ENCODE measurements at regions of chr3 and their contacts with region 1.

Region 1: DNA sequence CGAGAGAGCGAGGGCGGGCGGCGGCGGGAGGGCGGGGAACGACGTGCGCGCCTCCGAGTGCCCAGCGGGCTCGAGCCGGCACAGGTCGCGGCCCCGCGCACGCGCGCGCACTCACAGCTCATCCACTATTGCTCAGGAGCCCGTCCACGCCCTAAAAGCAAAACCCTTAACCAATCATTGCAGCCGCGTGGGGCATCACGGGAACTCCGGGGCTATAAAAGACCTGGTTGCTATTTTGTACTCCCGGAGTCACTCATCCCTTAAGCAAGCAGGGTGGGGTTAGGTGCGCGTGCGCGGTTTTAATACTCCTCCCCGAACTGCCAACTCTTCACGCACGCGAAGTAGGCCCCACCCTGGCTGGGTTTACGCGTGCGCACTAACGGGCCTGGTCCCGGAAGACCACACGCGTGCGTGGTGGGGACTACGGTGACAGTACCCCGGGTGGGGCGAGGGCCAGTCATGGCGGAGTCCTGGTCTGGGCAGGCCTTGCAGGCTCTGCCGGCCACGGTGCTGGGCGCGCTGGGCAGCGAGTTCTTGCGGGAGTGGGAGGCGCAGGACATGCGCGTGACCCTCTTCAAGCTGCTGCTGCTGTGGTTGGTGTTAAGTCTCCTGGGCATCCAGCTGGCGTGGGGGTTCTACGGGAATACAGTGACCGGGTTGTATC is at the starts of genes RHOA and TCTA:
- DNase-seq: peak; percentile 97 to 100 (median 99)
- ATAC-seq: peak; percentile 84
- H3K4me3 ChIP-seq: peak within 1 kb of the TSS; percentile 75
- H3K4me3 Mint-ChIP-seq: peak within 1 kb of the TSS; percentile 96
- H3K27ac ChIP-seq: peak within 1 kb of the TSS; percentile 94 to 95
- H3K27ac Mint-ChIP-seq: peak within 1 kb of the TSS; percentile 97
- H3K4me1 ChIP-seq: peaks cover 75% of the 10 kb centered on the region
- H3K4me1 Mint-ChIP-seq: peaks cover 70% of the 10 kb centered on the region
- H3K27me3 ChIP-seq: no peaks in the 10 kb centered on the region
- H3K27me3 Mint-ChIP-seq: no peaks in the 10 kb centered on the region
- CTCF ChIP-seq: no peak
- total RNA-seq, gene RHOA: 256 to 271 TPM
- total RNA-seq, gene TCTA: 21.4 to 22.0 TPM

Region 2: DNA sequence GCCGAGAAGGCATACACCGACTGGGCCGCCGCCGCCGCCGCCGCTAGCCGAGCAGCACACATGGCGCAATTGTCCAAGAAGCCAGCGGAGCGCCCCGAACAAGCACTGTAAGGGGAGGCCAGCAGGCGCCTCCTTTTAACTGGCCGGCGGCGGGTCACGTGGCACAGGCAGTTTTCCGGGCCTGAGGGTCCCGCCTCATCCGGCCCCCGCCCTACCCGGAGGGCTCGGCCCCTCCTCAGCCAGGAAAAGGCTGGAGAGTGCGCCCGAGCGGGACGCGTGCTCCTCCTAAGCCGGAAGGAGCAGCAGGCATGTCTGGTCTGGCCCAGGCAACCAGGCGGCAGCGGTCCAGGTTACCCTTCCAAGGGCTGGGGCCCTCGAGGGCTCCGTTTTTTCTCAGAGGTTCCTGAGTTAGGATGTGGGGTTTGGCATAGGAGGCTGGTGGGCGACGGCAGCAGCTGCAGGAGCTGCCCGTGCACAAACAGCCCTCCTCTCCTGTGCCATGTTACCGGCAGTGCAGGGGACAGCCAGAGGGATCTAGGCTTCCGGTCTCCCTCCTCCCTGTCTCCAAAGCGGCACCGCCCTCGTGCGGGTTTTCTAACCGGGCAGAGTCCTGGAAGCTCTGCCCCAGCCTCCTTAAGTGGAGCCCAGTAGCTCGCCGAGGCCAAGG is 53.8 kb before region 1 on chr3 and contains the start of gene GPX1:
- CTCF ChIA-PET with region 1: no interaction called
- POLR2A ChIA-PET with region 1: interaction called, 3 read pairs
- intact Hi-C with region 1: loop called (anchors 2 to 5 kb)
- DNase-seq: peak; percentile 51 to 88 (median 71)
- ATAC-seq: peak; percentile 63
- H3K4me3 ChIP-seq: peak within 1 kb of the TSS; percentile 86
- H3K4me3 Mint-ChIP-seq: peak within 1 kb of the TSS; percentile 94
- H3K27ac ChIP-seq: peak within 1 kb of the TSS; percentile 56 to 78
- H3K27ac Mint-ChIP-seq: peak within 1 kb of the TSS; percentile 92
- H3K4me1 ChIP-seq: peaks cover 31% of the 10 kb centered on the region
- H3K4me1 Mint-ChIP-seq: peaks cover 31% of the 10 kb centered on the region
- H3K27me3 ChIP-seq: no peaks in the 10 kb centered on the region
- H3K27me3 Mint-ChIP-seq: no peaks in the 10 kb centered on the region
- CTCF ChIP-seq: no peak
- total RNA-seq, gene GPX1: 20.8 to 22.9 TPM

Region 3: DNA sequence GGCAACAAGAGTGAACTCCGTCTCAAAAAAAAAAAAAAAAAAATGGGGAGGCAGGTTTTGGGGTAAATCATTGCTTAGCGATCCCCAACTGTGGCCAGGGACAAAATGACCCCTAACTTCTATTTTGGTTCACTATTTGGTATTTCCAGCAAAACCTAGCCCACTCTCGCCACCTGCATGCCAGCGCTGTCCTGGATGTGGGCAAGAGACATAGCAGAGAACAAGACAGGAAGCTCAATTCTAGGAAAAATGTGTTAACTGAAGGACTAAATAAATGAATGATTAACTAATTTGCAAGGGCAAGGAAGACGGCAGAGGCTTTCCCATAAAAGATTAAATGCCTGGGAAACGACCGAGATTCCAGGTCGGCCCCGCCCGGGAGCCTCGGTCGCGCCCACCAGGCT is 16.6 kb after region 1 on chr3:
- CTCF ChIA-PET with region 1: interaction called, 11 read pairs
- POLR2A ChIA-PET with region 1: interaction called, 32 read pairs
- intact Hi-C with region 1: loop called (anchors 1 kb)
- DNase-seq: peak in 2 of 14 experiments; percentile 24 to 32
- ATAC-seq: peak; percentile 2
- H3K4me3 ChIP-seq: peak overlapping the region; percentile 60
- H3K4me3 Mint-ChIP-seq: peak overlapping the region; percentile 95
- H3K27ac ChIP-seq: peak overlapping the region; percentile 66 to 85
- H3K27ac Mint-ChIP-seq: peak overlapping the region; percentile 89
- H3K4me1 ChIP-seq: peaks cover 33% of the 10 kb centered on the region
- H3K4me1 Mint-ChIP-seq: peaks cover 32% of the 10 kb centered on the region
- H3K27me3 ChIP-seq: no peaks in the 10 kb centered on the region
- H3K27me3 Mint-ChIP-seq: no peaks in the 10 kb centered on the region
- CTCF ChIP-seq: no peak

Region 4: DNA sequence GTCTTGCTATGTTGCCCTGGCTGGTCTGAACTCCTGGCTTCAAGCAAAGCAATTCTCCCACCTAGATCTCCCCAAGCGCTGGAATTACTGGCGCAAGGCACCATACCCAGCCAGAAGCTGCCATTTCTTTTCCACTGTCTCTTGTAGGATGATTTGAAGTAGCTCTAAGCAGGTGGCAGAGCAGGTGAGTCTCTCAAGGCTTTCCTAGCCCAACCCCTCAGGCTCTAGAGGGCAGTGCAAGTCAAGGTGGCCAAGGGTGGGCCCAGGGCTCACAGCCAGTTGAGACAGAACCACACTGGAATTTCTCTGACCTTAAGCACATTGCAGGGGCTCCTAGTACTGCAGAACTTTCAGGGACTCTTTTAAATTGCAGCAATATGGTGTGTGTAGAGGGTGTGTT is 42.4 kb after region 1 on chr3:
- CTCF ChIA-PET with region 1: interaction called, 45 read pairs
- POLR2A ChIA-PET with region 1: interaction called, 4 read pairs
- intact Hi-C with region 1: loop called (anchors 1 kb)
- DNase-seq: peak in 1 of 14 experiments; percentile 7
- ATAC-seq: no peak
- H3K4me3 ChIP-seq: no peak overlapping the region
- H3K4me3 Mint-ChIP-seq: no peak overlapping the region
- H3K27ac ChIP-seq: no peak overlapping the region
- H3K27ac Mint-ChIP-seq: no peak overlapping the region
- H3K4me1 ChIP-seq: no peaks in the 10 kb centered on the region
- H3K4me1 Mint-ChIP-seq: no peaks in the 10 kb centered on the region
- H3K27me3 ChIP-seq: no peaks in the 10 kb centered on the region
- H3K27me3 Mint-ChIP-seq: no peaks in the 10 kb centered on the region
- CTCF ChIP-seq: no peak

Region 5: GRCh38 chr3:49582177-49582576 is 170.1 kb after region 1 on chr3:
- CTCF ChIA-PET with region 1: no interaction called
- POLR2A ChIA-PET with region 1: no interaction called
- intact Hi-C with region 1: no loop called
- DNase-seq: no peak
- ATAC-seq: no peak
- H3K4me3 ChIP-seq: no peak overlapping the region
- H3K4me3 Mint-ChIP-seq: no peak overlapping the region
- H3K27ac ChIP-seq: no peak overlapping the region
- H3K27ac Mint-ChIP-seq: no peak overlapping the region
- H3K4me1 ChIP-seq: no peaks in the 10 kb centered on the region
- H3K4me1 Mint-ChIP-seq: no peaks in the 10 kb centered on the region
- H3K27me3 ChIP-seq: no peaks in the 10 kb centered on the region
- H3K27me3 Mint-ChIP-seq: no peaks in the 10 kb centered on the region
- CTCF ChIP-seq: no peak